HAP-1 (cell line): ENCODE measurements at regions of chr15 and their contacts with region 1.

Region 1: GRCh38 chr15:75229191-75230015 is 27.7 kb downstream of the C15orf39 start:
- DNase-seq: no peak
- H3K4me3 ChIP-seq: no peak overlapping the region
- H3K4me1 ChIP-seq: no peaks in the 10 kb centered on the region
- H3K27me3 ChIP-seq: peaks cover 56% of the 10 kb centered on the region

Region 2: DNA sequence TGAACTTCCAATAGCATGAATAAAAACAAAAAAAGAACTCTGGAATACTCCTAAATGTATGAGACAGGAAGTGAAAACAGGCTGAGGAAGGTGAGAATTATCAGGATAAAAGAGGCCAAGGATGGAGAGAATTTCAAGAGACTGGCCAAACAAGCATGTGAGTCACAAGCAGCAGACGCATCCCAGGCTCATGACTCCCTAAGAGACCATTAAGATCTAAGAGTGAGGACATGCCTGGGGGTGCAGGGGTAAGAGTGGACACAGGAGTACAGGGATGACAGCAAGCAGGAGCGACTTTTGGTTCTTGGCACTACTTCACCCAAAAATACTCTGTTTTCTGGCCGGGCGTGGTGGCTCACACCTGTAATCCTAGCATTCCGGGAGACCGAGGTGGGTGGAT is 363.3 kb before region 1 on chr15:
- in situ Hi-C with region 1: no loop called
- DNase-seq: no peak
- H3K4me3 ChIP-seq: no peak overlapping the region
- H3K4me1 ChIP-seq: peaks cover 19% of the 10 kb centered on the region
- H3K27me3 ChIP-seq: no peaks in the 10 kb centered on the region

Region 3: DNA sequence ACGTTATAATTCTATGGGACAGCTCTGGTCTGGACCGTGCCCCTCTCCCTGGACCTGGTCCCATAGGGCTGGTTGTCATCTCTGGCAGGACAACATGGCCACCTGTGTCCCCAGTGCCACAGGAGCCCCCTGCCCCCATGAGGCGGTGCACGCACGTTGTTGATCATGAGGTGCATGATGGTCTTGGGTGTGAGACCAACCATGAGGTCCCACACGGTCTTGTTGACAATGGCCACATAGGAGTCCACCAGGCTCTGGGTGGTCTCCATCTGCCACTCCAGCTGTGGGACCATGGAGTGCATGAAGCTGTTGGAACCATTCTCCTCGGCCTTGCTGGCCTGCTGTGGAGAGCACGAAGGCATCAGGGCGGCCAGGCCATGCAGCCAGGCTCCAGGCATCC is 72.9 kb after region 1 on chr15:
- in situ Hi-C with region 1: no loop called
- DNase-seq: no peak
- H3K4me3 ChIP-seq: no peak overlapping the region
- H3K4me1 ChIP-seq: peaks cover 11% of the 10 kb centered on the region
- H3K27me3 ChIP-seq: peaks cover 9% of the 10 kb centered on the region

Region 4: GRCh38 chr15:75314552-75315290 is 85.3 kb after region 1 on chr15:
- in situ Hi-C with region 1: loop called (anchors 5 kb)
- DNase-seq: peak in 1 of 2 experiments; percentile 7
- H3K4me3 ChIP-seq: no peak overlapping the region
- H3K4me1 ChIP-seq: no peaks in the 10 kb centered on the region
- H3K27me3 ChIP-seq: peaks cover 13% of the 10 kb centered on the region